Pancreas (tissue), 10 donors: ENCODE measurements at regions of chr14 and their contacts with region 1.

Region 1: DNA sequence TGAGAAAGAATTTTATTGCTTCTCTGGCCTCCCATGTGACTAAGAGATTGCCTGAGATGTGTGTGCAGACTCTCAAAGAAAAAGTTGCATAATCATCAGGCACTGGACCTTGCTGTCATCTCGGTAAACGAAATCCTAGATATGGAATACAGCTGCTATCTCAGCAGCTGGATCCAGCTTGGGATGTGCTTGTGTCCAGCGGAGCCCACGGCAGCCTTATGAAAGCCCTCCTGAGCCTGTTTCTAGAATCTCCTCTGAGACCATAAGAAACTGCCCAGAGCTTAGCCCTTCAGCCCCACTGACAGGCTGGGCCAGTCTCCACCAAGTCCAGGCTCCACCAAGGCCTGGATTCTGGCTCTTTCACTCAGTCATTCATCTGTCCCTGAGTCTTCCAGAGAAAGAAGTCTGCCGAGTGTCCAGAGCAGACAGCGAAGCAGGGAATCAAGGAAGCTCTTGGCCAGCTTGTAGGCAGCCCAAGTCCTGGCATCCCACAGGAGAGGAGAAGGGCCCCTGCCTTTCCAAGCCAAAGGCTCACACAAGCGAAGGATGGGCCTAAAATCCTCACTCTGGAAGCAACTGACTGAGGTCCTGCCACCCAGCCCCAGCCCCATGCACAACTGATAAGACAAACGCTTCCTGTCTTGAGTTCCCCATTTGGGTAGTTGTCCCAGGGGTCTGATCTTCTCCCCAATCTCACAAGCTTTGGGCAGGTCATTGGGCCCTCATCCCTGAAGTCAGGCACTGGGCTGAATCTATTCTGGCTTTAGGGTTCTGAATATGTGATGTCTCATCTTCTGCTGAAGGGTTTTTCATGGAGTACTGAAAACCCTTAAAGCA is 97.8 kb downstream of the SEC23A start:
- DNase-seq: no peak
- ATAC-seq: peak in 1 of 4 donors; percentile 36
- H3K4me3 ChIP-seq: no peak overlapping the region
- H3K27ac ChIP-seq: no peak overlapping the region
- H3K4me1 ChIP-seq: no peaks in the 10 kb centered on the region
- H3K27me3 ChIP-seq: no peaks in the 10 kb centered on the region
- CTCF ChIP-seq: no peak

Region 2: GRCh38 chr14:38121320-38122020 is 883.8 kb before region 1 on chr14:
- intact Hi-C with region 1: no loop called
- DNase-seq: no peak
- ATAC-seq: no peak
- H3K4me3 ChIP-seq: no peak overlapping the region
- H3K27ac ChIP-seq: no peak overlapping the region
- H3K4me1 ChIP-seq: no peaks in the 10 kb centered on the region
- H3K27me3 ChIP-seq: no peaks in the 10 kb centered on the region
- CTCF ChIP-seq: no peak

Region 3: DNA sequence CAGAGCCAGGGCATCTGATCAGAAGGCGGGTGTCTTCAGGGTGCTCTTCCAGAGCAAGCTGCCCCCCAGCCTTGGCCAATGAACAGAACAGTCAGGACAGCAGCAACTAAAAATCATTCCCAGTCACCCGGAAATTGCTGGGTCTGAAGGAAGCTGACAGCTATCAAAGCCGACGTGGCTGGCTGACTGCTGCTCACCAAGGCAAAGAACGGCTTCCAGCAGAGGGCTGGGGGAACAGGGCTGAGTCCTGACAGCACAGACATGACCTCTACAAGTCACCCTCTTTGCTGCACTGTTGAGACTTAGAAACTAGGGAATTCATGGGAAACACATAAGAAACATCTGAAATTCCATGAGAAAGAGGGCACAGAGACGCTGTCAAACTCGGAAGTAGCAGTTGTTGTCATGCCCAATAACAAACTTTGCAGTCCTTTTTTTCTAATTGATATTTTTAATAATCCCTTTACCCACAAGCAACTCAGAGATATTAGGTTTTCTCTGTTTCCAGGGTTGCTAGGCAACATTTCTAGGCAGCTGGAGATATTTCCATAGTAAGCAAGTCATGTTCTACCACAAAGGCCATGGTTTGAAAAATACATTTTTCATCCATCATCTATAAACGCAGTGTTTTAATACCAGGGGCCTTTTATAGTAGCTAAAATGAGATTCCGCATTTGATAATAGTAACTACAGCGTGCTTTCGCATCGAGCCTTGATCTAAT is 267.4 kb before region 1 on chr14:
- intact Hi-C with region 1: loop called in 1 of 3 experiments (anchors 10 kb)
- DNase-seq: no peak
- ATAC-seq: peak in 1 of 4 donors; percentile 52
- H3K4me3 ChIP-seq: no peak overlapping the region
- H3K27ac ChIP-seq: no peak overlapping the region
- H3K4me1 ChIP-seq: no peaks in the 10 kb centered on the region
- H3K27me3 ChIP-seq: no peaks in the 10 kb centered on the region
- CTCF ChIP-seq: no peak

Region 4: GRCh38 chr14:39154594-39155189 is 149.4 kb after region 1 on chr14:
- intact Hi-C with region 1: no loop called
- DNase-seq: no peak
- ATAC-seq: no peak
- H3K4me3 ChIP-seq: no peak overlapping the region
- H3K27ac ChIP-seq: no peak overlapping the region
- H3K4me1 ChIP-seq: no peaks in the 10 kb centered on the region
- H3K27me3 ChIP-seq: no peaks in the 10 kb centered on the region
- CTCF ChIP-seq: no peak